ENCODE measurements at regions of chr17 and their contacts with region 1.

Region 1: GRCh38 chr17:40168262-40168832 is 8.9 kb upstream of the RAPGEFL1 start:
- DNase-seq: peak in 8 of 14 experiments; percentile 14 to 82 (median 43)
- ATAC-seq: peak; percentile 89
- H3K4me3 ChIP-seq: no peak overlapping the region
- H3K4me3 Mint-ChIP-seq: no peak overlapping the region
- H3K27ac ChIP-seq: no peak overlapping the region
- H3K27ac Mint-ChIP-seq: peak overlapping the region; percentile 80
- H3K4me1 ChIP-seq: no peaks in the 10 kb centered on the region
- H3K4me1 Mint-ChIP-seq: peaks cover 9% of the 10 kb centered on the region
- H3K27me3 ChIP-seq: no peaks in the 10 kb centered on the region
- H3K27me3 Mint-ChIP-seq: no peaks in the 10 kb centered on the region
- CTCF ChIP-seq: peak; percentile 87

Region 2: GRCh38 chr17:40018211-40019121 is 149.9 kb before region 1 on chr17:
- CTCF ChIA-PET with region 1: interaction called, 3 read pairs
- POLR2A ChIA-PET with region 1: no interaction called
- intact Hi-C with region 1: loop called (anchors 1 to 2 kb)
- DNase-seq: no peak
- ATAC-seq: no peak
- H3K4me3 ChIP-seq: no peak overlapping the region
- H3K4me3 Mint-ChIP-seq: no peak overlapping the region
- H3K27ac ChIP-seq: no peak overlapping the region
- H3K27ac Mint-ChIP-seq: no peak overlapping the region
- H3K4me1 ChIP-seq: peaks cover 5% of the 10 kb centered on the region
- H3K4me1 Mint-ChIP-seq: peaks cover 6% of the 10 kb centered on the region
- H3K27me3 ChIP-seq: no peaks in the 10 kb centered on the region
- H3K27me3 Mint-ChIP-seq: no peaks in the 10 kb centered on the region
- CTCF ChIP-seq: no peak

Region 3: DNA sequence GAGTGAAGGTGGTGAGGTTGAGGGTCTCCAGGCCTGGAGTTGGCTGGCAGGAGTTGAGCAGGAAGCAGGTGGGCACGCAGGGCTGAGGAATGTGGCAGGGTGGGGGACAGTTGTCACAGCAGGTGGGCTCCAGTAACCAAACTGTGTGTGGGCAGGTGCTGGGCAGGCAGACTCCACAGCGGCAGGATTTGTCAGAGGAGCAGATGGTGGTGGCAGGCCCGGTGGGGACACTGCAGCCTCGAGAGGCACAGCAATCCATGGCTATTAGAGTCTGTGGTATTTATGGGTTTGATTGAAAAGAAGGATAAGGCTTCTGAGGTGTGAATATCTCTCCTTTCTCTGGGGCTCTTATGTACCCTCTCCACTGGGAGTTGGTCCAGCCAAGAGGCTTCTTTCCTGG is 825.5 kb after region 1 on chr17 and contains the start of gene KRTAP3-3:
- CTCF ChIA-PET with region 1: no interaction called
- POLR2A ChIA-PET with region 1: no interaction called
- intact Hi-C with region 1: no loop called
- DNase-seq: no peak
- ATAC-seq: no peak
- H3K4me3 ChIP-seq: no peak within 1 kb of the TSS
- H3K4me3 Mint-ChIP-seq: no peak within 1 kb of the TSS
- H3K27ac ChIP-seq: no peak within 1 kb of the TSS
- H3K27ac Mint-ChIP-seq: no peak within 1 kb of the TSS
- H3K4me1 ChIP-seq: no peaks in the 10 kb centered on the region
- H3K4me1 Mint-ChIP-seq: no peaks in the 10 kb centered on the region
- H3K27me3 ChIP-seq: peaks cover 12 to 34% of the 10 kb centered on the region in 2 experiments
- H3K27me3 Mint-ChIP-seq: peaks cover 64% of the 10 kb centered on the region
- CTCF ChIP-seq: no peak
- total RNA-seq, gene KRTAP3-3: not detected

Measured in CD4-positive, alpha-beta T cell (primary cell).